Ascending aorta (tissue), 2 donors: ENCODE measurements at regions of chr2 and their contacts with region 1.

Region 1: GRCh38 chr2:219278655-219279516 is at the start of gene DNAJB2:
- DNase-seq: peak; percentile 98 to 99
- H3K4me3 ChIP-seq: peak within 1 kb of the TSS; percentile 87 to 95
- H3K27ac ChIP-seq: peak within 1 kb of the TSS; percentile 99
- H3K4me1 ChIP-seq: peaks cover 11 to 39% of the 10 kb centered on the region in 2 donors
- H3K27me3 ChIP-seq: no peaks in the 10 kb centered on the region
- CTCF ChIP-seq: peak in 1 of 3 experiments; percentile 7
- total RNA-seq, gene DNAJB2: 51.0 TPM

Region 2: GRCh38 chr2:219177552-219178376 is 101.1 kb before region 1 on chr2 and contains the start of gene RETREG2:
- intact Hi-C with region 1: loop called (anchors 1 kb)
- DNase-seq: peak; percentile 34 to 93
- H3K4me3 ChIP-seq: peak within 1 kb of the TSS; percentile 91 to 99
- H3K27ac ChIP-seq: peak within 1 kb of the TSS; percentile 97 to 98
- H3K4me1 ChIP-seq: peaks cover 4 to 22% of the 10 kb centered on the region in 2 donors
- H3K27me3 ChIP-seq: no peaks in the 10 kb centered on the region
- CTCF ChIP-seq: peak in 2 of 3 experiments; percentile 11 to 19
- total RNA-seq, gene RETREG2: 83.5 TPM

Region 3: GRCh38 chr2:219218732-219219701 is 59.9 kb before region 1 on chr2 and contains the start of gene ABCB6:
- intact Hi-C with region 1: loop called (anchors 2 kb)
- DNase-seq: peak; percentile 93 to 99
- H3K4me3 ChIP-seq: peak within 1 kb of the TSS; percentile 64 to 68
- H3K27ac ChIP-seq: peak within 1 kb of the TSS; percentile 92 to 95
- H3K4me1 ChIP-seq: peaks cover 12 to 31% of the 10 kb centered on the region in 2 donors
- H3K27me3 ChIP-seq: no peaks in the 10 kb centered on the region
- CTCF ChIP-seq: no peak
- total RNA-seq, gene ABCB6: 17.9 TPM

Region 4: DNA sequence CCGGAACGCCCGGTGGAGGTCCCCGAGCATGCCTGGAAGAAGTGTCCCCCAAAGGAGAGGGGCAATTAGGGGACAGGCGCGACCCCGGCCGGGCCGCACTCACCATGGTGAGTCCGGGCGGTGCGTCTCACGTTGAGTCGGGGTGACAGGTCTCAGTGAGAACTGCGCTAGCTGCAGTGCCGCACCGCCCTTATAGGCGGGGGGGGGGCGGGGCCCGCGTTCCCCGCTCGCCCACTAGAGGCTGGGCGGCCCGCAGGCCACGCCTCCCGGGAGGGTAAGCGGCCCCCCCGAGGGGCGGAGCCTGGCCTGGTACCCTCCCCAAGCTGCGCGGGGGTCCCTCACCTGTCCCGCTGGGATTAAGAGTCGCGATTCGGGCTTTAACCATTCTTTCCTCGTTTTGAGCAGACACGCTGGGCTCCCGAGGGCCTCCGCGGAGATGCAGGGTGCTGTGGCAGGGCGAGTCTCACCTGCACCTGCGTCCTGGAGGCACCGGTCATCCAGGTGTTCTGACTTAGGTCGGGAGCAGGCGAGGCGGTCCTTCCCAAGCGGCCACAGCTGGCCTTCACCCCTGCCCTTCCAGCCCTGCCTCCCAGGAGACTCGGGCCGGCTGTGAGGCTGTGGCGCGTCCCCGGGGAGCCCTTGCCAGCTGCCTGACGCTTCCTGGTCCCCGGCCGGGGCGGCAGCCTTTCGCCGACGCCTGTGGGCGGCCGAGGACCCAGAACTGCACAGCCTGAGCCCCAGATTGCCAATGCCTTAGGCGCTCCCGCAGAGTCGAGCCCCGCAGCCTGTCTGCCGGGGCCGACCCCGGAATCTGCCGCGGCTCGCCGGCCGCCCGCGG is 24.9 kb before region 1 on chr2 and contains the start of gene TUBA4A:
- intact Hi-C with region 1: loop called (anchors 1 kb)
- DNase-seq: peak; percentile 58 to 93
- H3K4me3 ChIP-seq: peak within 1 kb of the TSS; percentile 70 to 73
- H3K27ac ChIP-seq: peak within 1 kb of the TSS; percentile 96 to 99
- H3K4me1 ChIP-seq: peaks cover 15 to 39% of the 10 kb centered on the region in 2 donors
- H3K27me3 ChIP-seq: no peaks in the 10 kb centered on the region
- CTCF ChIP-seq: peak in 1 of 3 experiments; percentile 8
- total RNA-seq, gene TUBA4A: 71.1 TPM

Region 5: DNA sequence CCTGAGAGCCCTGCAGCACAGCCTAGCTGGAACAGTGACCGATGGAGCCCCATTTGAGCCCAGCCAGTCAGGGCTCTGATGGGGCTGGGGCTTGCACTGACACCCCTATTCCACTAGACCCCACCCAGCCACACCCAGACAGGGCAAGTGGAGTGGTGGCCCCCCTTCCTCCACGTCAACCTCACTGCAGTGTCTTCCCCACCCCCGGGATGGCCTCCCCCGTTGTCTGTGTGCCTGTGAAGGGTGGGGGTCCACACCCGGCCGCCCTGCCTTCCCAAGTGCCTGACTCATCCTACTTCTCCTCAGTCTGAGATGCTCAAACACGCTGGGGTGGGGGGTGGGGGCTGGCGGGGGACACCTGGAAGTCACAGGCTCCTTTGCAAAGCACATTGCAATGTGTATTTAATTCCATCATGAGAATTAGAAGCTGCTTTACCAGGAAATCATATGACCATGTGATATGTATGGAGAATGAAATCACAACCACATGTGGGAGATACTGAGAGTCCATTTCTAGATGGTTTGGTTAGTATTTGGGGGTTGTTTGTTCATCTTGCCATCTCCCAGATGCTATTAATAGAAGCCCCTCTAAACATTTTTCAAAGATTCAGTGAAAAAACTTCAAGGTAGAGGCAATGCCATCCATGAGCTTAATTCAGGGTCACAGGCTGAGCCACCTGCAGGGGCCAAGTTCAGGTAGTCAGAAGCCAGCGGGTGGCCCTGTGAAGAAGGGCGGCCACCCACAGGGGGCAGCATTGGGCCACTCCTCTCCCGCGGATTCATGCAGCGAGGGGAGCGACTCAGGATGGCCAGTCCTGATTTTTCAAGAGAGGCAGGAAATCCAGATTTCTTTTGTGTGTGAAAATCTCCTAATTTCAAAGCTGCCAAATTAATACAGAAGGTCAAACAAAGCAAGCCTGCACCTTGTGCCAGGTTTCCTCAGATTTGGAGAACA is 197.1 kb after region 1 on chr2:
- intact Hi-C with region 1: no loop called
- DNase-seq: peak in 1 of 2 donors; percentile 81
- H3K4me3 ChIP-seq: no peak overlapping the region
- H3K27ac ChIP-seq: peak overlapping the region; percentile 51 to 73
- H3K4me1 ChIP-seq: no peaks in the 10 kb centered on the region
- H3K27me3 ChIP-seq: no peaks in the 10 kb centered on the region
- CTCF ChIP-seq: peak; percentile 67 to 88 (median 87)

Region 6: DNA sequence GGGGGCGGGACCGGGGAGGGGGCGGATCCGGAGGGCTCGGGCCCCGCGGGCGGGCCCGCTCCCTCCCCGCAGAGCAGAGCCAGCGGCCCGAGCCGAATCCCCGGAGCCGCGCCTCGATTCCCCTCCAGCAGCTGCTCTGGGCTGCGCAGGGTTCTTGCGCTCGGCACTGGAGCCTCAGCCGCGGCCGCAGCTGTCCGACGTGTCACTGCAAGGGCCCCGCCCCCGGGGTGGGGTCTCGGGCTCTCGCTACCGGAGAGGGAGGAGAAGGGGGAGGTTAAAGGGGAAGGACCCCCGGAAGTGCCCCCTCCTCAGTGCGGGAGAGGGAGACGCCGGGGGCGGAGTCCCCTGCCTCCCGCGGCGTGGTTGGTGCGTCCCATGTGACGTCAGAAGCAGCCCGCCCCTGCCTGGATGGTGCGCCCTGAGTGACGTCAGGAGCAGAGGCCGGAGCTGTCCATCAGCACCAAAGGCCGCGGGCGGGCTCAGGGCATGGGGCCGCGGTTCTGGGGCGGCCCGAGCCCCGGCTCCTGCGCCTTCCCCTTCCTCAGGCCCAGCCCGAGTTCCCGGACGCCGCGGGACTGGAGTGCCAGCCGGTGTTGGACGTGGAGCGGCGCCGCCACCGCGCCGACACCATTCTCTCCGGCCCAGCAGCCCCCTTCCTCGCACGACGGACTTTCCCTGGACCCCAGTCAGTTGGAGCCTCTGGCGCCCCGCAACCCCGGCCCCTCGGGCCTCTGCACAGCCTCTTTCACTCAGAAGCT is 264.9 kb after region 1 on chr2 and contains the starts of genes CHPF and TMEM198:
- intact Hi-C with region 1: loop called (anchors 10 kb)
- DNase-seq: peak; percentile 96 to 99
- H3K4me3 ChIP-seq: peak within 1 kb of the TSS; percentile 87 to 90
- H3K27ac ChIP-seq: peak within 1 kb of the TSS; percentile 92 to 95
- H3K4me1 ChIP-seq: peaks cover 8 to 24% of the 10 kb centered on the region in 2 donors
- H3K27me3 ChIP-seq: no peaks in the 10 kb centered on the region
- CTCF ChIP-seq: no peak
- total RNA-seq, gene CHPF: 249 TPM
- total RNA-seq, gene TMEM198: 6.0 TPM